ENCODE measurements at regions of chr3 and their contacts with region 1.

Region 1: DNA sequence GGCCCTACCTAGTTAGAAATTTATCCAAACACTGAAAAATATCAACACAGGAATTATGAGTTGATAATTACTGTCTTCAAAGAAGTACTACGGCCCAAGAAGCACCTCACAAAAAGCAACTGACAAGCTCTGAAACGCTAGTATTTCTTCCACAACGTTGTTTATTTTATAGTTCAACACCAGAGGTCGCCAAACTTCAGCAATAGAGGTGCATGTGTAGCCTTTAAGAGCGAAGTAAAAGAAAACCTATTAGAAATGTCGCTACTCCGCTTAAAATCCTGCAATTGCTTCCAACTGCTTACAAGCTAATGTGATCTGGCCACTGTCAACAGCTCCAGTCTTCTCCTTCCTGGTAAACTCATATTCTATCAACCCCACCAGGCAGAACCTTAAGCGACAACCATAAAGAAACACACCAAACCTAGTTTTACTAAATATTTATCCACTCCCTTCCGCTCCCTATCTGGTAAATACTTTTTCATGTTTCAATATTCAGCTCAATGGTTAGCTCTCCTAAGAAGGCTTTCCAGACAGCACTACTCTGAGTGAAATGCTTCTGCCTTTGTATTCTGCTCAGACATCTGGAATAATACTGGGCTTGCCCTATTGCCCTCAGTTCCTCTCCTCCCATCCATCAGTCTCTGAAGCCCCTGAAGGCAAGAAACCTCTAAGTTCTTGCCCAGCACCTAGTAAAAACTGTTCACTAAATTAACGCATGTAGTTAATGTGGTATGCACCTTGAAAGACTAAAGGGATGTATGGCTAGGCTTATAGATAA is 110.2 kb downstream of the NR1I2 start:
- DNase-seq: peak; percentile 26 to 89
- H3K4me3 ChIP-seq: no peak overlapping the region
- H3K27ac ChIP-seq: peak overlapping the region in 1 of 5 donors; percentile 26
- H3K4me1 ChIP-seq: peaks cover 0 to 11% (median 7%) of the 10 kb centered on the region in 4 donors
- H3K27me3 ChIP-seq: no peaks in the 10 kb centered on the region
- CTCF ChIP-seq: peak in 5 of 7 experiments; percentile 20 to 73 (median 44)
- EP300 ChIP-seq: no peak
- POLR2A ChIP-seq: no peak

Region 2: DNA sequence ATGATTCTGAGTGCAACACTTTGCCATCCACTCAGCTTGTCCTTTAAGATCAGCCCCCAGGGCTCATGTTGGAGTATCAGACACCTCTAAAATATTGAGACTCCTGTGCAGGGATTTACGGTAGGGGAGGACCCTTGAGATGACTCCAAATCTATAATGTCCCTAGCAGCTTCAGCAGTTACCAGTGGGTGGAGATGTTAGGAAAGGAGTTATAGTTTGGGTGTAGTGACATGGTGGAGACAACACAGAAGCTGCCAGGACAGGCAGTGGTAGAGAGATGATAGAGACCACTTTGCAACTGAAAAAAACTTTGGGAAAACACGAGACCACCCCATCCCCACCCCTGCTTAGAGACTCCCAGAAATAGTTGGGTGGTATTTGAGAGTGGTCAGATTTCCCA is 245.4 kb after region 1 on chr3:
- intact Hi-C with region 1: no loop called
- DNase-seq: no peak
- H3K4me3 ChIP-seq: no peak overlapping the region
- H3K27ac ChIP-seq: no peak overlapping the region
- H3K4me1 ChIP-seq: no peaks in the 10 kb centered on the region
- H3K27me3 ChIP-seq: no peaks in the 10 kb centered on the region
- CTCF ChIP-seq: no peak
- EP300 ChIP-seq: no peak
- POLR2A ChIP-seq: no peak

Region 3: DNA sequence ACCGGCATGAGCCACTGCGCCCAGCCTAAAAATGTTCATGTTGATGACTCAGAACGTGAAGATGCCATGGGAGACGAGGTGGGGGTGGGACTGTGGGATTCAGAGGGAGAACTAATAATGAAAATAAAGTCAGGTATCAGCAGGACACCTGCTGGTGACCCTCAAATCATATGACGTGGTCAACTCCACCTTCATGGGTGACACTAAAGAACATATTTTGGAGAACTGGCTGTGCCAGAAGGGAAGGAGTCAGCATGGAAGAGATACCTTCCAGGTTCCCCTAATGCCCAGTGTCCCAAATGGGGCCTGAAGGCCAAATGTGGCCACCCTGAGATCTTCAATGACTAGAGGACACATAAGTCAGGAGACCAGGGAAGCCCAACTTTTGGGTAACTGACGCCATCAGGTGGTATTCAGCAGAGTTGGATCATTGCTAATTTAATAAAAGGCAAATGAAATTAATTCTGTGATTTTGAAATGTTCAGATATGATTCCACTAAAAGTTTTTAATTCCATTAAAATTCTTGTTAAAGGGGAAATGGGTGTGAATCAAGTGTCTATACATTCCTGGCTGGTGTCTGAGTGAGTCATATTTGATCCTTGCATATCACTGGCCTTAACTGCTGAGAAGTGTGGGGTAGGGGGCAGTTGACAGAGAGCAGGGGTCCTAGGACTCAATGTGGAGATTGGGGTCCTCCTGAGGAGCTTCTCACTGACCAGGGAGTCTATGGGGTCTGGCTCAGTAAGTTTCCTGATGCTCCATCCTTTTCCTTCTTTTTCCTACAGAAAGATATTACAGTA is 290.8 kb after region 1 on chr3:
- intact Hi-C with region 1: loop called (anchors 5 kb)
- DNase-seq: peak in 1 of 2 donors; percentile 48
- H3K4me3 ChIP-seq: no peak overlapping the region
- H3K27ac ChIP-seq: no peak overlapping the region
- H3K4me1 ChIP-seq: no peaks in the 10 kb centered on the region
- H3K27me3 ChIP-seq: no peaks in the 10 kb centered on the region
- CTCF ChIP-seq: peak in 4 of 7 experiments; percentile 34 to 42 (median 34)
- EP300 ChIP-seq: no peak
- POLR2A ChIP-seq: no peak

Region 4: GRCh38 chr3:120214161-120214560 is 322.0 kb after region 1 on chr3:
- intact Hi-C with region 1: no loop called
- DNase-seq: no peak
- H3K4me3 ChIP-seq: no peak overlapping the region
- H3K27ac ChIP-seq: no peak overlapping the region
- H3K4me1 ChIP-seq: no peaks in the 10 kb centered on the region
- H3K27me3 ChIP-seq: no peaks in the 10 kb centered on the region
- CTCF ChIP-seq: no peak
- EP300 ChIP-seq: no peak
- POLR2A ChIP-seq: no peak

Measured in stomach (tissue), 19 donors.